K562 (cell line): ENCODE measurements at regions of chr5 and their contacts with region 1.

Region 1: GRCh38 chr5:128905571-128906110 is 59.6 kb upstream of the SLC27A6 start:
- DNase-seq: peak; percentile 47 to 74 (median 52)
- ATAC-seq: peak; percentile 88
- H3K4me3 ChIP-seq: no peak overlapping the region
- H3K27ac ChIP-seq: no peak overlapping the region
- H3K4me1 ChIP-seq: no peaks in the 10 kb centered on the region
- H3K27me3 ChIP-seq: no peaks in the 10 kb centered on the region
- CTCF ChIP-seq: peak; percentile 56 to 83 (median 59); a peak in 5 of 6 replicates
- EP300 ChIP-seq: no peak
- POLR2A ChIP-seq: no peak
- RAD21 ChIP-seq: peak; percentile 96

Region 2: DNA sequence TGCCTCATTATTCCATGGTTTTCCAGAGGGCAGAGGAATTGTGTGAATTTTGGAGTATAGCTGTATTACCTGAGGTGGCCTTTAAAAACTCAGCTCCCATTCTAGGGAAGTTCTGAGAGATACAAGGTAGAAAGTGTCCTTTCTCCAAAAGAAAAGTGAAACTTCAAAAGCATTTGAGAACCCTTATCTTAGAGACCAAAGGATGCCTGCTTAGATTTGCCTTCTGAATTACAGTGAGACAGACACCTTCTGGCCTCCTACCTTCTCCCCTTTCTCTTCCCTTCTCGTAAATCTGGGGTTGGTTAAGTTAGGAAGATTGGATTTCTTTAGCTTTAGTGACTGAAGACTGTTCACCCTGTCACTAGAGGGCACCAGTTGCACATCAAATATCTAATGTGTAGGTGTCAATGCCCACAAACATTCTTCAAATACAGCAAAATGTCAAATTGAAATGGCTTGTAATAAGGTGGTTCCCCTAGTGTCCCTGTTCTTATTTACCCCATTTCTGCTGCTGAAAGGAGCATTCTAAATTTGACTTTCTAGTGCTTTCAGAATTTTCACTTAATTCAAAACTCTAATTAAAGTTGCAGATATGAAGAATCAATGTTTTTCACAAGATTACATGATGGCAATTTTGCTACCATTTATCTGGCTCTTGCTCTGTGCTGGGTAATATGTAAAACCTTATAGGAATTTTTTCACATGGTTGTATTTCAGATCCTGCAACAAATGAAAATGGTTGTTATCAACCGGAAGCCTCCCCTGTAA is 1341.5 kb before region 1 on chr5:
- CTCF ChIA-PET with region 1: no interaction called
- POLR2A ChIA-PET with region 1: no interaction called
- in situ Hi-C with region 1: no loop called
- intact Hi-C with region 1: loop called (anchors 10 kb)
- DNase-seq: peak; percentile 27 to 72 (median 38)
- ATAC-seq: peak; percentile 91
- H3K4me3 ChIP-seq: no peak overlapping the region
- H3K27ac ChIP-seq: no peak overlapping the region
- H3K4me1 ChIP-seq: no peaks in the 10 kb centered on the region; a peak in 1 of 5 replicates
- H3K27me3 ChIP-seq: peaks cover 0 to 8% of the 10 kb centered on the region in 2 experiments; a peak in 2 of 5 replicates
- CTCF ChIP-seq: peak; percentile 53 to 77 (median 73); a peak in 5 of 6 replicates
- EP300 ChIP-seq: no peak
- POLR2A ChIP-seq: no peak
- RAD21 ChIP-seq: peak; percentile 73 to 82

Region 3: DNA sequence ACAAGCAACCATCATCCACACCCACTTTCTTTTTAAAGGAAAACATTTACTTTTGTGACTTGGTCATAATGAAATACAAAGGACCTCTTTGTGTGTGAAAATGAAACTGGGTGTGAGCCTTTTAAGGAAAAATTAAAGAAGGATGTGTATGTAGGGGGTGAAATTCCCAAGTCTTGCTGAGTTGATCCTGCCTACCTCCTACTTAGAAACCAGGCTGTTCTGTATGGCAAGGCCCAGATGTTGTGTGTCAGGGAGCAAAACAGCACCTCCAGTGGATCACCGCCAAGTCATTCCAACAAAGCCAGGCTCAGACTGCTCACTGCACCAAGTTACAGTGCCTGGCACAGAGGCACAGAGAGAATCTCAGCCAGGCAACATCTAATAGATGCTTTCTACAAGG is 169.1 kb before region 1 on chr5:
- CTCF ChIA-PET with region 1: no interaction called
- POLR2A ChIA-PET with region 1: no interaction called
- in situ Hi-C with region 1: no loop called
- intact Hi-C with region 1: no loop called
- DNase-seq: no peak
- ATAC-seq: no peak
- H3K4me3 ChIP-seq: no peak overlapping the region
- H3K27ac ChIP-seq: no peak overlapping the region
- H3K4me1 ChIP-seq: no peaks in the 10 kb centered on the region
- H3K27me3 ChIP-seq: no peaks in the 10 kb centered on the region
- CTCF ChIP-seq: no peak
- EP300 ChIP-seq: no peak
- POLR2A ChIP-seq: no peak
- RAD21 ChIP-seq: no peak

Region 4: DNA sequence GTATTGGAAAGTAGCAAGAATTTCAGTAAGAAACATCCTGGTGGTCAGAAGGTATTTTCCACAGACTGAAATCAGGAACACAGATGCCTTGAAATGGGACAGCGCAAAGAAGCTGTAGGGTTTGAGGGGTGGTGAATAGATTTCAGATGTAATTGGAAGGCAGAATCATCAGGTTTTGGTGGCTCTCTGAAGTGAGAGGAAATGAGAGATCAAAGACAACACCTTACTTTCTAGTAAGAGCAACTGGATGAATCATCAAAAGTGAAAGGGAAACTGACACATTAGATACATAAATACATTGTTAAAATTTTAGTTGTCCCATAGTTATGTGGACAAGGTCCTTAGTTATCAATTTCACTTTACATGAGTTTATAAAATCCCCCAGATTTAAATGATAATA is 128.6 kb before region 1 on chr5:
- CTCF ChIA-PET with region 1: no interaction called
- POLR2A ChIA-PET with region 1: no interaction called
- in situ Hi-C with region 1: no loop called
- intact Hi-C with region 1: no loop called
- DNase-seq: no peak
- ATAC-seq: no peak
- H3K4me3 ChIP-seq: no peak overlapping the region
- H3K27ac ChIP-seq: no peak overlapping the region
- H3K4me1 ChIP-seq: no peaks in the 10 kb centered on the region
- H3K27me3 ChIP-seq: no peaks in the 10 kb centered on the region
- CTCF ChIP-seq: no peak
- EP300 ChIP-seq: no peak
- POLR2A ChIP-seq: no peak
- RAD21 ChIP-seq: no peak

Region 5: DNA sequence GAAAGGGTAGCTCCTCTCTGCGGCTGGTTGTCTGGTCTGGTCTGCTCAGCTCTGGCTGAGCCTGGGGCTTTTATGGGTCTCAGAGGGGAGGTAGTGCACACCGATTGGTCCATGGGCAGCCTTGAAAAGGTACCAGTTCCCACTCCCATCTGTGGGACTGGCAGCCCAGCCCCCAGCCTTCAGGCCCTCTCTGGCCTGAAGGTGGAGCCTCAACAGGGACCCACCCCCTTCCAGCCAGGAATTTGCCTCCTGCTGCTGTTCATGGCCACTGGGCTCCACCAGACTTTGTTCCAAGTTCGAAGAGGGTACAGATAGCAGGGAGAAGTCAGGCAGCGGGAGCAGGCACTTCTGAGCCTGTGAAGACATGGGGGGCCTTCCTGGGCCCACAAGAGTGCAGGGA is 105.7 kb before region 1 on chr5:
- CTCF ChIA-PET with region 1: no interaction called
- POLR2A ChIA-PET with region 1: no interaction called
- in situ Hi-C with region 1: no loop called
- intact Hi-C with region 1: no loop called
- DNase-seq: no peak
- ATAC-seq: no peak
- H3K4me3 ChIP-seq: no peak overlapping the region
- H3K27ac ChIP-seq: no peak overlapping the region
- H3K4me1 ChIP-seq: no peaks in the 10 kb centered on the region
- H3K27me3 ChIP-seq: no peaks in the 10 kb centered on the region
- CTCF ChIP-seq: no peak
- EP300 ChIP-seq: no peak
- POLR2A ChIP-seq: no peak
- RAD21 ChIP-seq: no peak

Region 6: GRCh38 chr5:128895581-128895980 is 10.1 kb before region 1 on chr5:
- CTCF ChIA-PET with region 1: no interaction called
- POLR2A ChIA-PET with region 1: no interaction called
- in situ Hi-C with region 1: no loop called
- intact Hi-C with region 1: no loop called
- DNase-seq: no peak
- ATAC-seq: no peak
- H3K4me3 ChIP-seq: no peak overlapping the region
- H3K27ac ChIP-seq: no peak overlapping the region
- H3K4me1 ChIP-seq: no peaks in the 10 kb centered on the region
- H3K27me3 ChIP-seq: no peaks in the 10 kb centered on the region
- CTCF ChIP-seq: no peak
- EP300 ChIP-seq: no peak
- POLR2A ChIP-seq: no peak
- RAD21 ChIP-seq: no peak

Region 7: DNA sequence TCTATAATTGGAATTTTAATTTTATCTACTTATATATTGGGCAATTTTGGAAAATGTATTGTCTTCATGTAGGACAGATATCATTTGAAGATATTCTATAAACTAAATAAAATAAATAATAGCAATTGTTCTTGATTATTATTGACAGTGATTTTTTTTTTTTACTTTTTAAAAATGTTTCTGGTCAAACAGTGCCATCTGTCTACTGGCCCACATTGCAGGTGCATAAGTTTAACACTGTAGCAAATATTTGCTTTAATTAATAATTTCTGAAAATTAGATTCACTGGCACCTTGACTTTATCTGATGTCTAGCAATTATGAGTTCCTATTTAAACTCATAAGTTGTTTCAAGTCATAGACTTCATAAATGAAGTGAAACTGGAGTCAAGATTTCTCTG is 147.8 kb after region 1 on chr5:
- CTCF ChIA-PET with region 1: no interaction called
- POLR2A ChIA-PET with region 1: no interaction called
- in situ Hi-C with region 1: no loop called
- intact Hi-C with region 1: loop called (anchors 5 kb)
- DNase-seq: no peak
- ATAC-seq: no peak
- H3K4me3 ChIP-seq: no peak overlapping the region
- H3K27ac ChIP-seq: no peak overlapping the region
- H3K4me1 ChIP-seq: no peaks in the 10 kb centered on the region; a peak in 1 of 5 replicates
- H3K27me3 ChIP-seq: no peaks in the 10 kb centered on the region; a peak in 1 of 5 replicates
- CTCF ChIP-seq: peak in 1 of 3 experiments; percentile 19; a peak in 2 of 6 replicates
- EP300 ChIP-seq: no peak
- POLR2A ChIP-seq: no peak
- RAD21 ChIP-seq: peak; percentile 13 to 41; a peak in 2 of 4 replicates

Region 8: DNA sequence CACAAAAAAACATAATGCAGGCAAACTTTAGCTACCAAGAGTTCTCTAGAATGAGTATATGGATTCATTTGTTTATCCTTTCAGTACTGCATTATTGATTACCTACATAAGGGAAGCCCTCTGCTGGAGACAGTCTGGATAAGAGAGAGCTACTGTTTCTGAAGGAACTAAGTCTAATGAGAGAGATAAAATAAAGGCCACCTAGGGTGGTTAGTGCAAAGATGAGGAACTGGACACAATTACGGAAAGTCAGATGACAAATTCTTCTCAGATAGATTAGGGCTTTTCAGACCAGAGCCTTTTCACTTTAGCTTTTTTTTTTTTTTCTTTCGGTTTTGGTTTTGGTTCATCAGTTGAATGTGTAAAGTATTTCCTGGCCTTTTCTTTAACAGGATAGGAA is 220.2 kb after region 1 on chr5:
- CTCF ChIA-PET with region 1: no interaction called
- POLR2A ChIA-PET with region 1: no interaction called
- in situ Hi-C with region 1: loop called (anchors 25 kb)
- intact Hi-C with region 1: loop called (anchors 1 kb)
- DNase-seq: no peak
- ATAC-seq: peak; percentile 44; the same call in 2 of the 3 replicates
- H3K4me3 ChIP-seq: no peak overlapping the region
- H3K27ac ChIP-seq: no peak overlapping the region
- H3K4me1 ChIP-seq: 0 out of 5 replicates have a peak, but pooled peaks cover 0 to 4% of the 10 kb centered on the region in 2 experiments
- H3K27me3 ChIP-seq: no peaks in the 10 kb centered on the region
- CTCF ChIP-seq: no peak
- EP300 ChIP-seq: no peak
- POLR2A ChIP-seq: no peak
- RAD21 ChIP-seq: 0 out of 4 replicates have a peak, but pooled peaks of 1 of the 2 experiments have one; percentile 10

Region 9: DNA sequence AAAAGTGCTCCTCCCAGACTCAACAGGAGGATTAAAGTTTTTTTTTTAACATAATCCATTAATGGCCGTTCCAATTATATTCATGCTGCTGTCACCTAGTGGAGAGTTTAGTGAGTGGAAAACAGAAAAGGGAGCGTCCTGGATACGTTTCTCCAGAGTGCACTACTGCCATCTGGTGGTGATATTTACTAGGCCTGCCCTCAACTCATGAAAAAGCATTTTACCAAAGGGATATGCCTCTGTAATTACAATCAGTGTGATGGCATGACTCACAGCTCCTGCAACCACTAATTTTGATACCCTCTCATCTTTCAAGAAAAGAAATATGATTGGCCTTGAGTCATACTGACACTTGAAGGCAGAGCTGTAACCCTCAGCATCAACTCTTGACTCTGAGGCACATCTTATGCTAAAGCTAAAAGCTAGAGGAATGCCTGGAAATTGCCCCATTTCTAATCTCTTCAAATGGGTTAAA is 862.3 kb after region 1 on chr5:
- CTCF ChIA-PET with region 1: interaction called, 17 read pairs
- POLR2A ChIA-PET with region 1: no interaction called
- in situ Hi-C with region 1: no loop called
- intact Hi-C with region 1: loop called (anchors 1 kb)
- DNase-seq: peak; percentile 58 to 85 (median 74)
- ATAC-seq: peak; percentile 99
- H3K4me3 ChIP-seq: no peak overlapping the region
- H3K27ac ChIP-seq: no peak overlapping the region
- H3K4me1 ChIP-seq: no peaks in the 10 kb centered on the region
- H3K27me3 ChIP-seq: no peaks in the 10 kb centered on the region
- CTCF ChIP-seq: peak; percentile 93 to 99 (median 98)
- EP300 ChIP-seq: no peak
- POLR2A ChIP-seq: no peak
- RAD21 ChIP-seq: peak; percentile 89 to 96